AG04450 (cell line): ENCODE measurements at regions of chr7 and their contacts with region 1.

Region 1: DNA sequence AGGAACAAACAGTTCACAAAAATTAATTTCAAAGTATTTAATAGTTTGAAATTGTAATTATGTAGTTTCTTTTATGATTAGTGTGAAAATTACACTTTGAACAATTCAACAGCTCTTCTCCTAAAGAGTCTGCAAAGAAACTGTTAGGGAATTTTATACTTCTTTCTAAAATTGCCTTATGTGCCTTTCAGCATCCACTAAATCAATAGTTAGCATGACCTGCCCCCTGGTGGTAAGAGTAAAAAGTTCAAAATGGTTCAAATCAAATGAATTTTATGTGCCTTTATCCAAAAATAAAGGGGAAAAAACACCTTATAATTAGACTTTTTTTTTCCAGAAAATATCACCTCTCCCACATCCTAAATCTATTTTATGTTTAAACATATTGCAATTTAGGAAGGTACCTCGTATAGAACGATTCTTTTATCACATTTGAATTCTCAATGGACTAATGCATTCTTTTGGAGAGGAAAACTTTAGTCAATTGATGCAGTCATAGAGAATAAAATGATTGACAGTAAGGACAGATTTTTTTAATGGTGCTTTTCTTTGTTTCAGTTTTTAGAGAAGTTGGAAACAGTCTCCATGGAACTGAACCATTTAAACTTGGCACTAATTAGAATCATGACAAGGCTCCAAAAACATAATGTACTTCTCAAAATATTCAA is 163.7 kb downstream of the SEMA3D start:
- DNase-seq: peak; percentile 15
- H3K4me3 ChIP-seq: no peak overlapping the region
- H3K27ac ChIP-seq: no peak overlapping the region
- H3K27me3 ChIP-seq: no peaks in the 10 kb centered on the region
- CTCF ChIP-seq: peak; percentile 52

Region 2: GRCh38 chr7:83976295-83976694 is 1046.9 kb before region 1 on chr7:
- CTCF ChIA-PET with region 1: interaction called, 15 read pairs
- POLR2A ChIA-PET with region 1: no interaction called
- DNase-seq: no peak
- H3K4me3 ChIP-seq: no peak overlapping the region
- H3K27ac ChIP-seq: no peak overlapping the region
- H3K27me3 ChIP-seq: no peaks in the 10 kb centered on the region
- CTCF ChIP-seq: peak; percentile 56

Region 3: DNA sequence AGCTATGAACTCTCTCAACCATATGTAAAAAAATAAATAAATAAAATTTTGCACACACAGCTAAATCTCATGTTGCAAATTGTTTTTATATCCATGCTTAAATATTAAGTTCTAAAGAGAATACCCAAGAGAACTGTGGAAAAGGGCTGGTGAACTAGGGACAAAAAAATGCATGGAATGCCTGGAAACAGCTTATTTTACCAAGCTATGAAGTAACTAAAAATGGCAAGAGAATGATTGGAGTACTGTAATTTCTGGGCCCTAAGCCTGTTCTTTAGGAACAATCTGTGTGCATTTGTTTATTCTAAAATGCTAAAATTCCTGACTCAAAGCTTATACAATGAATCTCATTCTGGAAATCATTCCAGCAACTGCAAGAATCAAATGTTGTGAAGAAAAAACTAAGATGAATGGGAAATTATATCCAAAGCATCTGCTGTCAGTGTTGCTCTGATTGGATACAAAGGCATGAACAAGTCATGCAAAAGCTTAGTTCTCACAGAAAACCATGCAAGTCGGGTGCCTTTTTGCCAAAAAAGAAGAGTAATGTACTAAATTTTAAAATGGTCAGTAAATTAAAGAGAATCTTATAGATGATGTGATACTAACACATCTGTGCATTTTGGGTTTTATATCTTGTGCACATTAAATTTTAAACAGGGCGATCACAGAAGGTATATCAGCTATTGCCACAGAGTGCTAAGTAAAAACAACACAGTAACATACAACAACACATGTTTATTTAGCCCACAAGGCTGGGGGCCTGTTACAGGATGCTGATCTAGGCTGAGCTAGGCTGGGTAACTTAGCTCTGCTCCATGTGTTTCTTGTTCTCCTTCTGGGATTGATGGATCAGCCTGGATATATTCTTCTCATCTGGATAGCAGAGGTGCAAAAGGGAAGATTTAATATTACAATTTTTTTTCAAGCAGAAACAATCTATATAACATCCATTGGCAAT is 375.1 kb before region 1 on chr7:
- CTCF ChIA-PET with region 1: interaction called, 10 read pairs
- POLR2A ChIA-PET with region 1: no interaction called
- DNase-seq: peak; percentile 79
- H3K4me3 ChIP-seq: no peak overlapping the region
- H3K27ac ChIP-seq: peak overlapping the region; percentile 41
- H3K27me3 ChIP-seq: no peaks in the 10 kb centered on the region
- CTCF ChIP-seq: no peak